HCT116 (cell line): ENCODE measurements at regions of chr3 and their contacts with region 1.

Region 1: DNA sequence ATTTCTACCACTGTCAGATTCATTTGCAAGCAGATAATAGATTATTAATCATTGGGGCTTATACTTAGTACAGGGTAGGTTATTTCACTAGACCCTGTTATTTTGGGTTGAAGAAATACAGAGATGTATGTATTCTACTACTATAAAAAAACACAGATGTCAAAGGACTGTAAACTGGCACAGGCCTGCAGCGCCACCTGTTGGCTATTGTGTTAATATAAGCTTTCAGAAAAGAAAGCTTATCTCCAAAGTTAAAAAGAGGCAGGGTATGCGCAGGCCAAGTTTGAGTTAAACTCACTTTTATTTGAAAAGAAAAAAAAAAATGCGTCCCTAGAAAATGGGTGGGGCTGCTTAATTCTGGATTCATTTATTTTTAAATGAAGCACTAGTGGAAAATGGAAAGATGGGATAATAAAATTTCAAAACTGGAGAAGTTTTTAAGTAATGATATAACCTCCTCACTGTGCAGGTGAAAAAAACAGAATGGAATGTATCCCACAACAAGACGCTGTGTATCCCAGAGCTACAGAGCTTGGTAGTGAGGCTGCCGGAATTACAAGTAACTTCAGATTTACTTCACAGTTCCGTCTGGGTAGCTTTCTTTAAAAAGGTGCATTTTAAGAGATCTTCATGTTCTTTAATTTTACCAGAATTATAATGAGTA is 407.2 kb upstream of the TGFBR2 start:
- DNase-seq: peak; percentile 27
- ATAC-seq: peak; percentile 77
- H3K4me3 ChIP-seq: no peak overlapping the region
- H3K27ac ChIP-seq: no peak overlapping the region
- H3K4me1 ChIP-seq: no peaks in the 10 kb centered on the region
- H3K27me3 ChIP-seq: no peaks in the 10 kb centered on the region
- CTCF ChIP-seq: peak; percentile 62 to 86 (median 82)
- POLR2A ChIP-seq: no peak
- RAD21 ChIP-seq: peak; percentile 91

Region 2: DNA sequence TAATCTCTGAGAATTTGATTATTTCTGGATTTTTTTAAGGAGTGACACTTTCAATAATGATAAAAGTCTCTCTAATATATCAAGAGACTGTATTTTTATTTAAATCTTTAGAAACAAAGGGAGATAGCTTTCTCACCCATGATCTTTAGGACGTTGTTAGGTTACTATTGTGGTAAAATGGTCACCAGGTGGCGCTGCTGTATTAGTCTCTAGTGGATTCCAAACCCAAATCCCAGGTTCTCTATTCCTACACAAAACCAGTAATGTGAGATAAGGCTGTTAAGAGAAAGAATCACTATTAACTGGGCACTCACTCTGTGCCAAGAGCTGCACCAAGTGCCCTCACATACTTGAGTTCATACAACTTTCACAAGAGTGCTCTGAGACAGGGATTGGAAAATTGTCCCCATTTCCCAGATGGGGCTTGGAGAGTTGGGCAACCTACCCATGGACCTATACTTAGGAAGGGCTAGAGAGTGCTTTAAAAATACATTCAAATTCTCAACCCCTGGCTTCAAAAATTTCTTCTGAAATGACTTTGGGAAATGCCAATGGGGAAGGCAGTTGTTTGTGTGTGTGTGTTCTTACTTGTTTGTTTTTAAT is 186.2 kb before region 1 on chr3:
- CTCF ChIA-PET with region 1: interaction called, 41 read pairs
- POLR2A ChIA-PET with region 1: no interaction called
- RAD21 ChIA-PET with region 1: interaction called in 1 of 2 experiments, 3 read pairs
- intact Hi-C with region 1: loop called (anchors 1 kb)
- DNase-seq: peak; percentile 64
- ATAC-seq: peak; percentile 93
- H3K4me3 ChIP-seq: no peak overlapping the region
- H3K27ac ChIP-seq: no peak overlapping the region
- H3K4me1 ChIP-seq: no peaks in the 10 kb centered on the region
- H3K27me3 ChIP-seq: no peaks in the 10 kb centered on the region
- CTCF ChIP-seq: peak; percentile 38 to 83 (median 62); a peak in 5 of 6 replicates
- POLR2A ChIP-seq: no peak
- RAD21 ChIP-seq: peak; percentile 85

Region 3: GRCh38 chr3:30112902-30113484 is 86.2 kb before region 1 on chr3:
- CTCF ChIA-PET with region 1: interaction called, 7 read pairs
- POLR2A ChIA-PET with region 1: no interaction called
- RAD21 ChIA-PET with region 1: interaction called in 1 of 2 experiments, 3 read pairs
- intact Hi-C with region 1: loop called (anchors 1 kb)
- DNase-seq: peak; percentile 23
- ATAC-seq: peak; percentile 66
- H3K4me3 ChIP-seq: no peak overlapping the region
- H3K27ac ChIP-seq: no peak overlapping the region
- H3K4me1 ChIP-seq: no peaks in the 10 kb centered on the region; a peak in 1 of 4 replicates
- H3K27me3 ChIP-seq: no peaks in the 10 kb centered on the region
- CTCF ChIP-seq: peak; percentile 55 to 72 (median 68); a peak in 5 of 6 replicates
- POLR2A ChIP-seq: no peak
- RAD21 ChIP-seq: peak; percentile 79

Region 4: GRCh38 chr3:30693470-30694120 is 494.4 kb after region 1 on chr3:
- CTCF ChIA-PET with region 1: interaction called, 14 read pairs
- POLR2A ChIA-PET with region 1: no interaction called
- RAD21 ChIA-PET with region 1: interaction called in 1 of 2 experiments, 5 read pairs
- intact Hi-C with region 1: loop called (anchors 1 kb)
- DNase-seq: peak; percentile 40
- ATAC-seq: peak; percentile 70
- H3K4me3 ChIP-seq: no peak overlapping the region
- H3K27ac ChIP-seq: no peak overlapping the region; the same call in 1 of the 2 replicates
- H3K4me1 ChIP-seq: peaks cover 19 to 31% of the 10 kb centered on the region in 2 experiments
- H3K27me3 ChIP-seq: no peaks in the 10 kb centered on the region
- CTCF ChIP-seq: peak; percentile 62 to 85 (median 67); a peak in 5 of 6 replicates
- POLR2A ChIP-seq: no peak
- RAD21 ChIP-seq: peak; percentile 97